Aorta (tissue), 5 donors: ENCODE measurements at regions of chr5 and their contacts with region 1.

Region 1: DNA sequence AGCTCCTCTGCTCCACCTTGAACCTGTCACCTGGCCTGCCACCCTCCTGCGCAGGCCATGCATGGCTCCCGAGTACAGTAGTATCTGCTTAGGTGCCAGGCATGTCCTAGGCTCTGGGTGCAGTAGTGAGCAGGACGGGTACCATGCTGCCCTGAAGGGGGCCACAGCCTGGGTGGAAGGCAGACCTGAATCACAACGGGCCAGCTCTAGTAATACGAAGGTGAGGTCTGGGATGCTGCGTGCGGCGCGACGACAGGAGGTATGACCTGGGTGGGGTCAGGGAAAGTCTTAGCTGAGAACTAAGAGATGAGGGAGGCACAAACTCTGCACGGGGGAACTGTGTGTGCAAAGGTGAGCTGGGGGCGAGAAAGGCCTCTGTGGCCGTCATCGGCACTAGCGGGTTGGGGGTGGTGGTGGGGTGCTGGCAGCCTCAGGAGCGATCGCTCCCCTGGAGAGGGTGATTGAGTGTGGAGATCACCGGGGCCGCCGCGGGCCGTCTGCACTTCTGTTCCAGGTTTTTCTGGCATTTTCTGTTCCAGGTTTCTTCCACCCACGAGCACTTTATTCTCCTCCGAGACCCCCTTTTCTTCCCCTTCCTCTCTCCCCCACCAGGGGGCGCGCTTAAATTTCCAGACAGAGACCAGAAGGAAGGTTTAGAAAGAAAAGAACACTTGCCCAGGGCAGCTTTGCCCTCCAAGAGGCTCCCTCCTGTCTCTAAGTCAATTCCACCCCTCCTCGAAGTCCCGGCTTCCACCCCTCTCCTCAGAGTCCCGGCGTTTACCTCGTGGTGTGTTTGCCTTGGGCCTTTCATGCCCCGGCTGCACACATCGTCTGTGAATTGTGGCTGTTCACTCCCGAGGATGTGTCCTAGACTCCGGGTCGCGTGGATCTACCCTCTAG is 15.1 kb downstream of the PDLIM4 start:
- DNase-seq: peak; percentile 66 to 89
- ATAC-seq: peak; percentile 63
- H3K4me3 ChIP-seq: no peak overlapping the region
- H3K27ac ChIP-seq: no peak overlapping the region
- H3K4me1 ChIP-seq: no peaks in the 10 kb centered on the region
- H3K27me3 ChIP-seq: no peaks in the 10 kb centered on the region

Region 2: DNA sequence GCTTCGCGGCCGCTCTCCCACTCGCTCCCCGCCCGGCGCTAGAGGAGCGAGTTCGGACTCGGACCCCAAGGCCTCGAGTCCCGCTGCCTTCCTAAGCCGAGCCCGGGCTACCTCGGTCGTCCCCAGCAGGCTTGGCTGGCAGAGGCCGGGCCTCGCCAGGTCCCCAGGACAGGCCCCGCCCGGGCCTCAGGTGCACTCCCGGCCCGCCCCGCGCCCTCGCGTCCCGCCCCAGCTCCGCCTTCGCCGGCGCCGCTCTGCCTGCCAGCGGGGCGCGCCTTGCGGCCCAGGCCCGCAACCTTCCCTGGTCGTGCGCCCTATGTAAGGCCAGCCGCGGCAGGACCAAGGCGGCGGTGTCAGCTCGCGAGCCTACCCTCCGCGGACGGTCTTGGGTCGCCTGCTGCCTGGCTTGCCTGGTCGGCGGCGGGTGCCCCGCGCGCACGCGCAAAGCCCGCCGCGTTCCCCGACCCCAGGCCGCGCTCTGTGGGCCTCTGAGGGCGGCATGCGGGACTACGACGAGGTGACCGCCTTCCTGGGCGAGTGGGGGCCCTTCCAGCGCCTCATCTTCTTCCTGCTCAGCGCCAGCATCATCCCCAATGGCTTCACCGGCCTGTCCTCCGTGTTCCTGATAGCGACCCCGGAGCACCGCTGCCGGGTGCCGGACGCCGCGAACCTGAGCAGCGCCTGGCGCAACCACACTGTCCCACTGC is 97.1 kb after region 1 on chr5 and contains the start of gene SLC22A5:
- intact Hi-C with region 1: loop called in 1 of 2 experiments (anchors 5 kb)
- DNase-seq: peak; percentile 67 to 87
- ATAC-seq: peak; percentile 81
- H3K4me3 ChIP-seq: peak within 1 kb of the TSS; percentile 58 to 91
- H3K27ac ChIP-seq: peak within 1 kb of the TSS; percentile 1 to 90
- H3K4me1 ChIP-seq: peaks cover 0 to 3% of the 10 kb centered on the region in 2 donors
- H3K27me3 ChIP-seq: no peaks in the 10 kb centered on the region
- total RNA-seq, gene SLC22A5: 8.6 to 14.4 TPM

Region 3: GRCh38 chr5:132410451-132411381 is 138.2 kb after region 1 on chr5:
- intact Hi-C with region 1: no loop called
- DNase-seq: peak; percentile 89 to 93
- ATAC-seq: peak; percentile 86
- H3K4me3 ChIP-seq: peak overlapping the region; percentile 54 to 60
- H3K27ac ChIP-seq: peak overlapping the region; percentile 51 to 68
- H3K4me1 ChIP-seq: peaks cover 0 to 2% of the 10 kb centered on the region in 2 donors
- H3K27me3 ChIP-seq: no peaks in the 10 kb centered on the region